ENCODE measurements at regions of chr7 and their contacts with region 1.

Region 1: DNA sequence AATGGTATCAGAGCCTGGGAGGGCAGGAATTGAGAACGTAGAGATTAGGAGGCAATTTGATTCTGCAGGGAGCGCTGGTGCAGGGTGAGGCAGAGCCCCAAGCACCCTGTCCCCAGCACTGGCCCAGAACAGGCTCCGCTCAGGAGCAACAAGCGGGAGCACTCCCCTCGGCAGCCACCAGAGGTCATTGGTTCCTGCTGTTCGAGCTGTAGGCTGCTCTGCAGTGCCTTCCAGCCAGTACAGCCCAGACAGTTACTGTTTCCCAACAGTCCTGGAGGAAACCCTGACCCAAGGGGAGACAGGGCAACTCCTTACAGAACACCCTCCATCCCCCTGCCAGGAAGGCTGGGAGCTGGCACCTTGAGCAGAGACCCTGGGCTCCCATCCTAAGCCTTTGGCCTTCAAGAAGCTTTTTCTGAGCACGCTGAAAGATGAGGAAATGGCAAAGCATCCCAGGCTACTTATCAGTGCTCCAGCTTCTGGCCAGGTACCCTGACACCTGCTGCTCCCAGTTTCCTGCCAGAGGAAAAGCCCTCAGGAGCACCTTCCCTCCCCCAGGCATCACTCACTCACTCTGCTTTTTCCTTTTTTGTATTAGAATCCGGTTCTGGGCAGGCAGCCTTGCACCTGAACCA is 71.2 kb upstream of the EFCAB10 start:
- DNase-seq: peak; percentile 86
- ATAC-seq: peak; percentile 90
- H3K4me3 Mint-ChIP-seq: no peak overlapping the region
- H3K27ac Mint-ChIP-seq: no peak overlapping the region
- H3K4me1 Mint-ChIP-seq: peaks cover 14% of the 10 kb centered on the region
- H3K27me3 Mint-ChIP-seq: no peaks in the 10 kb centered on the region

Region 2: GRCh38 chr7:105664816-105665525 is 12.5 kb after region 1 on chr7:
- CTCF ChIA-PET with region 1: interaction called, 13 read pairs
- POLR2A ChIA-PET with region 1: no interaction called
- intact Hi-C with region 1: no loop called
- DNase-seq: no peak
- ATAC-seq: no peak
- H3K4me3 Mint-ChIP-seq: no peak overlapping the region
- H3K27ac Mint-ChIP-seq: no peak overlapping the region
- H3K4me1 Mint-ChIP-seq: peaks cover 5% of the 10 kb centered on the region
- H3K27me3 Mint-ChIP-seq: no peaks in the 10 kb centered on the region

Region 3: GRCh38 chr7:105678811-105679495 is 26.5 kb after region 1 on chr7:
- CTCF ChIA-PET with region 1: interaction called, 20 read pairs
- POLR2A ChIA-PET with region 1: no interaction called
- intact Hi-C with region 1: no loop called
- DNase-seq: peak; percentile 62
- ATAC-seq: peak; percentile 21
- H3K4me3 Mint-ChIP-seq: peak overlapping the region; percentile 83
- H3K27ac Mint-ChIP-seq: peak overlapping the region; percentile 93
- H3K4me1 Mint-ChIP-seq: peaks cover 63% of the 10 kb centered on the region
- H3K27me3 Mint-ChIP-seq: no peaks in the 10 kb centered on the region

Region 4: GRCh38 chr7:105759670-105760550 is 107.4 kb after region 1 on chr7:
- CTCF ChIA-PET with region 1: interaction called, 7 read pairs
- POLR2A ChIA-PET with region 1: no interaction called
- intact Hi-C with region 1: loop called (anchors 2 to 5 kb)
- DNase-seq: peak; percentile 47
- ATAC-seq: peak; percentile 20
- H3K4me3 Mint-ChIP-seq: no peak overlapping the region
- H3K27ac Mint-ChIP-seq: no peak overlapping the region
- H3K4me1 Mint-ChIP-seq: peaks cover 28% of the 10 kb centered on the region
- H3K27me3 Mint-ChIP-seq: no peaks in the 10 kb centered on the region

Region 5: DNA sequence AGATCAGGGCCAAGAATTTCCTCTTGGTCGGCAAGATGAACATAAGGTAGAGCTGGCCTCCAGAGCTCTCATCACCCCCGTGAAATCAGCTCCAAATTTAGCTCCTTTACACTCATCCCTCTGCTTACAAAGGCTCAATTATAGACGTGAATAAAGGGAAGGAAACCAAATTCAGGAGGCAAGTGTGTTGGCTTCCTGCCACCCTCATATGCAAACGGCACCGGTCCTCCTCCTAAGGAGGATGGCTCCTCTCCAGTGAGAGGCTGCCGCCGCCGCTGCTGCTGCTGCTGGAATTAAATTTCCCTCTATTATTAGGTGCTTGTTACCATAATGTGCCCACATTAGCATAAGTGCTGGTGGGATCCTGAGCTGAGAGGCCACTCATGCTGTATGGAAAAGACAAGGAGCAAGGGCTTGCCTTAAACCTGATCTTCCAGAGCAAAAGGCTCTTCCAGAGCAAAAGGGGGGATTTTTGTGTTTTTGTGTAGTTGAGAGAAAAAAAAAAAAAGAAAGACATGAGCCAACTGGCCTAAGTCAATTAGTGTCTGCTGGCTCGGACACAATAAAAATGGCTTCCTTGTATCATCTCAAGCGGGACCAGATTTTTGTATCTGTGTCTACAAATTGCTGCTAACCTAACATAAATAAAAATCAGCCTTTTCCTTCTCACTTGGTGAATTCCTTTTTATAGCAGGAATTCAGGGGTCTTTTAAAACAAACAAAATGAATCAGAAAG is 379.0 kb after region 1 on chr7:
- CTCF ChIA-PET with region 1: interaction called, 16 read pairs
- POLR2A ChIA-PET with region 1: interaction called, 3 read pairs
- intact Hi-C with region 1: no loop called
- DNase-seq: no peak
- ATAC-seq: no peak
- H3K4me3 Mint-ChIP-seq: no peak overlapping the region
- H3K27ac Mint-ChIP-seq: no peak overlapping the region
- H3K4me1 Mint-ChIP-seq: peaks cover 10% of the 10 kb centered on the region
- H3K27me3 Mint-ChIP-seq: no peaks in the 10 kb centered on the region

Region 6: DNA sequence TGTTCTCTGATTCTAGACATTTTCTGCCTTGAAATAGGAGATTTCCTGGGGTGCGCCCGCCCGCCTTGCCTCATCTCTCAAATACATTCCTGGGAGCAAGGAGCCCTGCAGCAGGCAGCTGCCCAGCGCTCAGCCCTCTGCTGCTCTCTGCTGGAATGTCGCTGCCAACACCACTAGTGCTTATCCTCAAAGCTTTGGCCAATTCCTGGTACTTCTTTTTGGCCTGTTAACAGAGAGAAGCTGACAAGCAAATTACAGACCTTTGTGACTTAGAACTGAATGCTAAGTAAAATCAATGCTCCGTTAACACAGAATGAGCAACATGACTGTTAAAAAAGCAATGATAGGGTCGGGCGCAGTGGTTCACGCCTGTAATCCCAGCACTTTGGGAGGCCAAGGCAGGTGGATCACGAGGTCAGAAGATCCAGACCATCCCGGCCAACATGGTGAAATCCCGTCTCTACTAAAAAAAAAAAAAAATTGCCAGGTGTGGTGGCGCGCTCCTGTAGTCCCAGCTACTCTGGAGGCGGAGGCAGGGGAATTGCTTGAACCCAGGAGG is 501.5 kb after region 1 on chr7:
- CTCF ChIA-PET with region 1: interaction called, 4 read pairs
- POLR2A ChIA-PET with region 1: no interaction called
- intact Hi-C with region 1: loop called in 1 of 2 experiments (anchors 5 kb)
- DNase-seq: peak; percentile 84
- ATAC-seq: peak; percentile 96
- H3K4me3 Mint-ChIP-seq: no peak overlapping the region
- H3K27ac Mint-ChIP-seq: no peak overlapping the region
- H3K4me1 Mint-ChIP-seq: peaks cover 6% of the 10 kb centered on the region
- H3K27me3 Mint-ChIP-seq: peaks cover 18% of the 10 kb centered on the region